Heart right ventricle (tissue), 16 donors: ENCODE measurements at regions of chr20 and their contacts with region 1.

Region 1: DNA sequence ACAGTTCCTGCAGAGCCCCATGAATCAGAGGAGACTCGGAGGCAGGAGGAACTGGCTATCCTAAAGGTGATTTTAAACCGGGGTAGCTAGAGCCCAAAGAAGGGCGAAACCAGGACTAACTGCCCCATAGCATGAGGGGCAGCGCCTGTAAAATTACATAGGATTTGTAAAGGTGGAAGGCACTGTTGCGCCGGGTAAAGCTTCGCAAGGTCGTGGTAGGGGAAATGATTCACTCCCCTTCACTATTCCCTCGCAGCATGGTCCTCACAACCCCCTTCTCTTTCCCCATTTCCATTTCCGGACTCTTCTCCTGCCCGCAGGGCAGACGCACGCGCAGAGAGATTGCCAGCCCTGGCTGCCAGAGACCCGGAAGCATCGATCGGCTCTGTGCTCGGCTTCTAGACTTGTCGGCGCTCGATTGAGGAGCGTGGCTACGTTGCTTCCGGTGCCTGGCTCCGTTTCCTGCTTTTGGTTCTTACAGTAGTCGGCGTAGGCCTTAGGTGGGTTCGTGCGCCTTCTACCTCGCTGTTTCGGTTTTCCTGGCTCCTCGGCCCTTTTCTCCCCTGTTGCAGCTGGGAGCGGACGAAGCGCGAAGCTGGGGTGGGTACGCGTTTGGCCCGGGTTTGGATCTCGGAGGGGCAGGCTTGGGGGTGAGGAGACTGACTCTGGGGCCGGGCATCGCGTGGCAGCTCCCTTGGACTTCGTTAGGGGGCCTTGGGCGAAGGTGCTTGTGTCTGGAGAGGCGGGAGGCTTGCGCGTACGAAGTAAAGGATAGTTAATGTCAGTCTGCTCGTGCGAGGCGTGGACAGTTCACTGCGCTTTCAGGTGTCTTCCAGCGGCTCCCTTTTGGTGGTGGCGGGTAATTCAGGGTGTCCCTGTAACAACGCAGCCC is at the start of gene SNRPB2:
- DNase-seq: peak; percentile 90 to 94
- ATAC-seq: peak; percentile 98 to 100 (median 99)
- H3K4me3 ChIP-seq: peak within 1 kb of the TSS; percentile 75 to 97 (median 92)
- H3K27ac ChIP-seq: peak within 1 kb of the TSS; percentile 24 to 95 (median 81)
- H3K4me1 ChIP-seq: peaks cover 0 to 26% (median 14%) of the 10 kb centered on the region in 9 donors
- H3K27me3 ChIP-seq: peaks cover 0 to 39% (median 24%) of the 10 kb centered on the region in 7 donors
- CTCF ChIP-seq: peak in 2 of 9 donors; percentile 4 to 8
- total RNA-seq, gene SNRPB2: 28.8 to 40.3 (median 32.2) TPM

Region 2: DNA sequence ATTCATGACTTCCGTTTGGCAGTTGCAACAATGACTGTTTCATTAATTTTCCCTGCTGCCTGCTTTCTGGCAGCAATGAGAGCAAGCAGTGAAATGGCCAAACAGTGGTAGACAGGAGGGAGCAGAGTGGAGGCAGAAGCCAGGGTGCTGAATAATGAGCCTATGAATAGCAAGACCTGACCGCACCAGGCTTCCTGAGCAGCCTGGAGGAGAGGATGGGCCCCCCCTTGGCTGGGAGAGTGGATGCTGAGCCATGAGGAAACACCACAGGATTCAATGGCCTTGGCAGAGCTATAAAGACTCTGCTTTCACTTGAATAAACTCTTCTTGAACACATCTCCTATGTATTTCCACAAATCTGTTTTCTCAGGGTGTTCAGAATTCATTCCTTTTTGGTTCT is 68.1 kb before region 1 on chr20:
- intact Hi-C with region 1: loop called in 1 of 10 experiments (anchors 10 kb)
- DNase-seq: peak in 1 of 2 donors; percentile 4
- ATAC-seq: peak in 3 of 8 donors; percentile 20 to 80 (median 56)
- H3K4me3 ChIP-seq: no peak overlapping the region
- H3K27ac ChIP-seq: no peak overlapping the region
- H3K4me1 ChIP-seq: peaks cover 0 to 5% (median 0%) of the 10 kb centered on the region in 9 donors
- H3K27me3 ChIP-seq: peaks cover 0 to 4% (median 0%) of the 10 kb centered on the region in 7 donors
- CTCF ChIP-seq: no peak